ENCODE measurements at regions of chr6 and their contacts with region 1.

Region 1: GRCh38 chr6:160455541-160456213 is 107.5 kb downstream of the SLC22A3 start:
- DNase-seq: peak; percentile 48 to 78 (median 60)
- H3K4me3 ChIP-seq: no peak overlapping the region
- H3K4me3 Mint-ChIP-seq: no peak overlapping the region
- H3K27ac ChIP-seq: no peak overlapping the region
- H3K27ac Mint-ChIP-seq: no peak overlapping the region
- H3K4me1 ChIP-seq: peaks cover 45% of the 10 kb centered on the region
- H3K4me1 Mint-ChIP-seq: peaks cover 34 to 36% (median 35%) of the 10 kb centered on the region in 3 donors
- H3K27me3 ChIP-seq: no peaks in the 10 kb centered on the region
- H3K27me3 Mint-ChIP-seq: peaks cover 0 to 4% of the 10 kb centered on the region in 2 donors

Region 2: GRCh38 chr6:160137989-160138835 is 317.5 kb before region 1 on chr6:
- CTCF ChIA-PET with region 1: interaction called, 28 read pairs
- POLR2A ChIA-PET with region 1: no interaction called
- DNase-seq: peak; percentile 38 to 74 (median 47)
- H3K4me3 ChIP-seq: no peak overlapping the region
- H3K4me3 Mint-ChIP-seq: no peak overlapping the region
- H3K27ac ChIP-seq: no peak overlapping the region
- H3K27ac Mint-ChIP-seq: peak overlapping the region in 2 of 8 donors; percentile 17 to 20
- H3K4me1 ChIP-seq: no peaks in the 10 kb centered on the region
- H3K4me1 Mint-ChIP-seq: peaks cover 7 to 9% (median 8%) of the 10 kb centered on the region in 3 donors
- H3K27me3 ChIP-seq: no peaks in the 10 kb centered on the region
- H3K27me3 Mint-ChIP-seq: no peaks in the 10 kb centered on the region

Region 3: GRCh38 chr6:160445130-160445529 is 10.5 kb before region 1 on chr6:
- CTCF ChIA-PET with region 1: interaction called, 11 read pairs
- POLR2A ChIA-PET with region 1: no interaction called
- DNase-seq: no peak
- H3K4me3 ChIP-seq: no peak overlapping the region
- H3K4me3 Mint-ChIP-seq: no peak overlapping the region
- H3K27ac ChIP-seq: no peak overlapping the region
- H3K27ac Mint-ChIP-seq: peak overlapping the region in 1 of 8 donors; percentile 79
- H3K4me1 ChIP-seq: no peaks in the 10 kb centered on the region
- H3K4me1 Mint-ChIP-seq: no peaks in the 10 kb centered on the region
- H3K27me3 ChIP-seq: no peaks in the 10 kb centered on the region
- H3K27me3 Mint-ChIP-seq: peaks cover 8 to 33% of the 10 kb centered on the region in 2 donors